ENCODE measurements at regions of chr3 and their contacts with region 1.

Region 1: GRCh38 chr3:107522510-107523288 is at the start of gene BBX:
- DNase-seq: peak; percentile 99
- H3K4me3 ChIP-seq: peak within 1 kb of the TSS; percentile 85 to 87 (median 86)
- H3K27ac ChIP-seq: peak within 1 kb of the TSS; percentile 18
- H3K4me1 ChIP-seq: peaks cover 8% of the 10 kb centered on the region
- H3K27me3 ChIP-seq: peaks cover 1 to 2% of the 10 kb centered on the region in 2 experiments
- CTCF ChIP-seq: no peak
- POLR2A ChIP-seq: peak; percentile 25
- total RNA-seq, gene BBX: 35.6 and 43.4 TPM in 2 replicates

Region 2: GRCh38 chr3:107271787-107272387 is 250.8 kb before region 1 on chr3:
- CTCF ChIA-PET with region 1: interaction called, 3 read pairs
- POLR2A ChIA-PET with region 1: no interaction called
- dilution Hi-C with region 1: no loop called
- intact Hi-C with region 1: loop called (anchors 5 kb)
- DNase-seq: peak; percentile 36
- H3K4me3 ChIP-seq: no peak overlapping the region
- H3K27ac ChIP-seq: no peak overlapping the region
- H3K4me1 ChIP-seq: no peaks in the 10 kb centered on the region
- H3K27me3 ChIP-seq: peaks cover 4 to 23% of the 10 kb centered on the region in 2 experiments
- CTCF ChIP-seq: peak; percentile 30 to 33
- POLR2A ChIP-seq: no peak

Region 3: DNA sequence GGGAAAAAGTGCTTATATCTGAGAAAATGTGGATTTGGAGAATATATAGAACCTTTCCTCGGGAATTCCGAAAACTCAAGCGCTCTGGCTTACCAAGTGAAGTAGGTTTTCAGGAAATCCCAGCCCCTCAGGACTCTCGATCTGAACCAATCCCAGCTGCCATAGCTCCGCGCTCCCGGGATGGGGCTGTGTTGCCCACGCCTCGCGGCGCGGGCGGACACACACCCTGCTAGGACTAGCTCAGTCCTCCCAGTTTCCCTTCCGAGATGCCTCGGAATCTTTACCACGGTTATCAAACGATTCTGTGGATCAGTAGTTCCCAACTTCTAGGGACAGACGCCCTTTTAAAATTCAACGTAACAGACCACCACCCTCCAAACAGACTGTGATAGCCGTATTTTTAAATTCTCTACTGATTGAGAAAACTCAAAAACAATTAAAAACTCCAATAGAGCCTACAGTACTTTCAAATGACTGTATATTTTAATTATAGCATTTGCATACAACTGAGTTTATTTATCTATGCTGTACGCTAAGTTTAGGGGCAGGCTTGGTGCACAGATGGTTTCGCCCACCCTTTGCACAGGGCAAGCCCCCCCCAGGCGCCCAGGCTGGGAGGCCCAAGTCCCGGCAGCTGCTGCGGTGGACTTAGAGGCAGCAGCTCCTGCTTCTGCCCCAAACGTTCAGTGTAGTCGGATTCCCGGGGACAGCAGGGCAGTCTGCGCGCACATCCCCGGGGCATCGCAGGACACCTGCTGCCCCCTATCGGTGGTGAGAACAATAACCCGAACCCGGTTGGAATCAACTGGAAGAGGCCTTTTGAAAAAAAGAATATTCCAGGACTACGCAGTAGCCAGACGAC is 93.1 kb before region 1 on chr3:
- CTCF ChIA-PET with region 1: interaction called, 9 read pairs
- POLR2A ChIA-PET with region 1: no interaction called
- dilution Hi-C with region 1: no loop called
- intact Hi-C with region 1: loop called (anchors 1 kb)
- DNase-seq: peak; percentile 83
- H3K4me3 ChIP-seq: peak overlapping the region; percentile 21 to 75 (median 32)
- H3K27ac ChIP-seq: no peak overlapping the region
- H3K4me1 ChIP-seq: peaks cover 20% of the 10 kb centered on the region
- H3K27me3 ChIP-seq: peaks cover 0 to 3% of the 10 kb centered on the region in 2 experiments
- CTCF ChIP-seq: peak; percentile 90 to 92
- POLR2A ChIP-seq: no peak

Region 4: DNA sequence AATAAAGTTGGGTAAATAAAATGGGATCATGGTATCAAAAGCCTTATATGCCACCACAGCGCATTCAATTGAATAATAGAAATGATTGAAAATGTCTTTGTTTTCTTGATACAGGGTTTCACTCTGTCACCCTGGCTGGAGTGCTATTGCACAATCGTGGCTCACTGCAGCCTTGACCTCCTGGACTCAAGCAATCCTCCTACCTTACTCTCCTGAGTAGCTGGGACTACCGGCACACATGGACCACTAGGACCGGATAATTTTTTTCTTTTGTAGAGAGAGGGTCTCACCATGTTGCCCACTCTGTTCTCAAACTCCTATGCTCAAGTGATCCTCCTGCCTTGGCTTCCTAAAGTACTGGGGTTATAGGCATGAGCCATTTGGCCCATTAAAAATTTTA is 33.8 kb before region 1 on chr3:
- CTCF ChIA-PET with region 1: no interaction called
- POLR2A ChIA-PET with region 1: no interaction called
- dilution Hi-C with region 1: no loop called
- intact Hi-C with region 1: no loop called
- DNase-seq: no peak
- H3K4me3 ChIP-seq: no peak overlapping the region
- H3K27ac ChIP-seq: no peak overlapping the region
- H3K4me1 ChIP-seq: no peaks in the 10 kb centered on the region
- H3K27me3 ChIP-seq: peaks cover 3 to 6% of the 10 kb centered on the region in 2 experiments
- CTCF ChIP-seq: no peak
- POLR2A ChIP-seq: no peak

Region 5: GRCh38 chr3:107598926-107599771 is 76.5 kb after region 1 on chr3:
- CTCF ChIA-PET with region 1: no interaction called
- POLR2A ChIA-PET with region 1: no interaction called
- dilution Hi-C with region 1: no loop called
- intact Hi-C with region 1: loop called (anchors 2 kb)
- DNase-seq: peak; percentile 84
- H3K4me3 ChIP-seq: peak overlapping the region; percentile 19 to 62 (median 37)
- H3K27ac ChIP-seq: peak overlapping the region; percentile 84
- H3K4me1 ChIP-seq: peaks cover 20% of the 10 kb centered on the region
- H3K27me3 ChIP-seq: no peaks in the 10 kb centered on the region
- CTCF ChIP-seq: no peak
- POLR2A ChIP-seq: no peak

Measured in endothelial cell of umbilical vein (primary cell).